ENCODE measurements at regions of chr19 and their contacts with region 1.

Region 1: DNA sequence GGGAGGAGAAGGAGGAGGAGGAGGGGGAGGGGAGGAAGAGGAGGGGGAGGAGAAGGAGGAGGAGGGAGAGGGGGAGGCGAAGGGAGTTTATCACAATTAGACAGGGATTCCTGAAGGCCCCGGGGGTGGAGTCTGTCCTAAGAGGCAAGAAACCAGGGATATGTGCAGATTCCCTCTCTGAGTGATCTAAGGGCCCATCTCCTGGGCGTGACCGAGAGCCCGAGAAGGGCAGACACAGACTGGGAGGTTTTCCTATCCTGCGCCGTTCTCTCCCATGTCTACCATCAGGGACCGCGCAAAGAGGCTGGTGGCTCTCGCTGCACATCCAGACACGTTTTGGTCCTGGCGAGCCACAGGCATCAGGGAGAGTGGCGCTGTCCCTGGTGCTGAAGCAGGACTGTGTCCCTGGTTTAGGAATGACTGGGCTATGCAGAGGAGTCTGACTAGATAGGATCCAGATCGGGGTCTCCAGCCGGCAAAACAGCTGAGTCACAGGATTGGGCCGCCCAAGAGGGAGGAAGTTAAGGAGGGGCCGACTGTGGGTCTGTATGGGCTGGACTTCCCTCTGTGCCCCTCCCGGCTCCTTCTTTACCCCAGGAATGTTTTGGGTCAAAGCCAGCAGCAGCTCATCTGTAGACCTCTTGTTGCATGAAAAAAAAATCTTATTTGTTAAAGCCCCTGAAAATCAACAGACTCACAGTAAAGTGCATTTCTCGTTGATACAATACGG is 17.9 kb upstream of the ZNF175 start:
- DNase-seq: peak; percentile 56
- ATAC-seq: no peak
- H3K4me3 Mint-ChIP-seq: peak overlapping the region; percentile 89
- H3K27ac Mint-ChIP-seq: peak overlapping the region; percentile 46
- H3K4me1 Mint-ChIP-seq: peaks cover 72% of the 10 kb centered on the region
- H3K27me3 Mint-ChIP-seq: no peaks in the 10 kb centered on the region
- CTCF ChIP-seq: no peak

Region 2: GRCh38 chr19:51367565-51368365 is 185.4 kb before region 1 on chr19:
- CTCF ChIA-PET with region 1: no interaction called
- POLR2A ChIA-PET with region 1: no interaction called
- intact Hi-C with region 1: no loop called
- DNase-seq: peak; percentile 99
- ATAC-seq: peak; percentile 84
- H3K4me3 Mint-ChIP-seq: peak overlapping the region; percentile 98
- H3K27ac Mint-ChIP-seq: peak overlapping the region; percentile 96
- H3K4me1 Mint-ChIP-seq: peaks cover 36% of the 10 kb centered on the region
- H3K27me3 Mint-ChIP-seq: no peaks in the 10 kb centered on the region
- CTCF ChIP-seq: no peak

Region 3: DNA sequence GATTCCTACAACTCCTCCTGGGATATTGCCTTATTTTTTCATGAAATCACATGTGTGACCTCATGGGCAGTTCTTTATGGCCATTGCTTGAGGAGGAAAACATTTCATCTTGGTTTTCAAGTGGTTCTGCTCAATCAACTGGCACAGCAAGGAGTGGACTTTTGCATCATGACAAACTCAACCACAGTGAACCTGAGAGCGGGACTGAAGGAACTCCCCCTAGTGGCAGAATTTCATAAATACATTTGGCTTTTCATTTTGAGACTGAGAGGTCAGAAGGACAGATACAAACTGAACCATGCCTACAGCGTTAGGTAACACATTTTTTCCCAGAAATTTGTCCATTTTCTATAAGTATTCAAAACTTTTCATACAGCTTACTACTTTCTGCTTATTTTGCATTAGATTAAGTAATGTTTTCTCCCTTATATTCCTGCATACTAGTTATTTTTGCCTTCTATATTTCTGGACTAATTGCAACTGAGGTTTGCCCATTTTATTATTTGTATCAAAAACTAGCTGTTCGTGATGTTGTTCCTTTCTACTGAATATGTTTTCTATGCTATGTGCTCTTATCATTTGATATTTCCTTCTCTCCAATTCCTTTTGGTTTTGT is 38.2 kb before region 1 on chr19:
- CTCF ChIA-PET with region 1: interaction called, 19 read pairs
- POLR2A ChIA-PET with region 1: no interaction called
- intact Hi-C with region 1: loop called (anchors 5 kb)
- DNase-seq: no peak
- ATAC-seq: no peak
- H3K4me3 Mint-ChIP-seq: no peak overlapping the region
- H3K27ac Mint-ChIP-seq: no peak overlapping the region
- H3K4me1 Mint-ChIP-seq: peaks cover 7% of the 10 kb centered on the region
- H3K27me3 Mint-ChIP-seq: peaks cover 2% of the 10 kb centered on the region
- CTCF ChIP-seq: peak; percentile 72

Region 4: GRCh38 chr19:51531349-51532315 is 21.5 kb before region 1 on chr19 and contains the start of gene SIGLEC6:
- CTCF ChIA-PET with region 1: no interaction called
- POLR2A ChIA-PET with region 1: interaction called, 8 read pairs
- intact Hi-C with region 1: loop called (anchors 1 kb)
- DNase-seq: peak; percentile 60
- ATAC-seq: peak; percentile 97
- H3K4me3 Mint-ChIP-seq: peak within 1 kb of the TSS; percentile 83
- H3K27ac Mint-ChIP-seq: peak within 1 kb of the TSS; percentile 83
- H3K4me1 Mint-ChIP-seq: peaks cover 88% of the 10 kb centered on the region
- H3K27me3 Mint-ChIP-seq: no peaks in the 10 kb centered on the region
- CTCF ChIP-seq: no peak
- total RNA-seq, gene SIGLEC6: 16.4 and 28.7 TPM in 2 replicates

Region 5: DNA sequence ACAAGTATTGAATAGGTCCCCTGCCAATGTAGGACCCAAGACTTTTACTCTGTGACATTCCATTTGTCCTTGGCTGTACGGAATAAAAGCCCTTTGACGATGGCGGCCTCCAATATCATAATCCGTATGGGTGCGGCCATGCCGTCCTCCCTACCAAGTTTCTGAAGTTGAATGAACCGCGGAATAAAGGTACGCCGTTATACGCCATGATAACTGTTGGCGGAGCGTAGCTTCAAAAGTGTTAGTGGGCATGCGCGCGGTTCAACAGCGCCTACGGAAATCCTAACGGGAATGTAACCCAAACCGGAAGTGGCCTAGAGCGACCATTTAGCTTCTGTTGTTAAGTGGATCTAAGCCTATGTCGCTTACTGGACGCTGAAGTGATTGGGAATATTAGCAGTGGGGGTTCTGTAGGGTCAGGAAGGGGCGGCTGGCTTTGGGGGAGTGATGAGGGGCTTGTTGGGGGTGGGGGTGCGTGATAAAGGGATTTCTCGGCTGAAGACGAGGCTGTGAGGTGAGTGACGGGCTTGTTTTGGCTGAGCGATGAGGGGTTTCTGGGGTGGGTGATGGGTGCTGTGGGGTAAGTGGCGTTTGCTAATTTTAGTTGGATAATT is 17.9 kb after region 1 on chr19 and contains the start of gene ZNF175:
- CTCF ChIA-PET with region 1: interaction called, 5 read pairs
- POLR2A ChIA-PET with region 1: interaction called, 5 read pairs
- intact Hi-C with region 1: loop called (anchors 2 kb)
- DNase-seq: peak; percentile 68
- ATAC-seq: peak; percentile 93
- H3K4me3 Mint-ChIP-seq: peak within 1 kb of the TSS; percentile 96
- H3K27ac Mint-ChIP-seq: peak within 1 kb of the TSS; percentile 86
- H3K4me1 Mint-ChIP-seq: peaks cover 38% of the 10 kb centered on the region
- H3K27me3 Mint-ChIP-seq: no peaks in the 10 kb centered on the region
- CTCF ChIP-seq: no peak
- total RNA-seq, gene ZNF175: 20.6 and 23.6 TPM in 2 replicates

Region 6: GRCh38 chr19:52269338-52270261 is 716.4 kb after region 1 on chr19 and contains the start of gene ZNF766:
- CTCF ChIA-PET with region 1: no interaction called
- POLR2A ChIA-PET with region 1: interaction called, 11 read pairs
- intact Hi-C with region 1: no loop called
- DNase-seq: peak; percentile 98
- ATAC-seq: peak; percentile 97
- H3K4me3 Mint-ChIP-seq: peak within 1 kb of the TSS; percentile 98
- H3K27ac Mint-ChIP-seq: peak within 1 kb of the TSS; percentile 94
- H3K4me1 Mint-ChIP-seq: peaks cover 45% of the 10 kb centered on the region
- H3K27me3 Mint-ChIP-seq: no peaks in the 10 kb centered on the region
- CTCF ChIP-seq: no peak
- total RNA-seq, gene ZNF766: 33.0 and 35.0 TPM in 2 replicates